Dendritic cell treated with granulocyte-macrophage colony-stimulating factor and Interleukin-4, amounts not matched to agents 40 ng/mL and 50 ng/mL, for 4 days (primary cell): ENCODE measurements at regions of chr10 and their contacts with region 1.

Region 1: GRCh38 chr10:110535958-110536891 is 31.3 kb upstream of the SMC3 start:
- H3K4me3 Mint-ChIP-seq: no peak overlapping the region
- H3K27ac Mint-ChIP-seq: peak overlapping the region; percentile 57
- H3K4me1 Mint-ChIP-seq: peaks cover 45% of the 10 kb centered on the region
- H3K27me3 Mint-ChIP-seq: peaks cover 29% of the 10 kb centered on the region

Region 2: GRCh38 chr10:110425684-110426293 is 110.4 kb before region 1 on chr10:
- intact Hi-C with region 1: loop called (anchors 10 kb)
- H3K4me3 Mint-ChIP-seq: no peak overlapping the region
- H3K27ac Mint-ChIP-seq: peak overlapping the region; percentile 69
- H3K4me1 Mint-ChIP-seq: peaks cover 84% of the 10 kb centered on the region
- H3K27me3 Mint-ChIP-seq: peaks cover 6% of the 10 kb centered on the region